Activated T-helper 1 cell treated with anti-CD3 and anti-CD28 coated beads, Interleukin-12 subunit alpha, Interleukin-12 subunit beta, Interleukin-2, Interleukin-4 antibody, amounts not matched to agents 30 ng/mL and 10 ng/mL and 1 ng/mL, durations not matched to agents 14 hours and 24 hours and 36 hours (primary cell): ENCODE measurements at regions of chr11 and their contacts with region 1.

Region 1: DNA sequence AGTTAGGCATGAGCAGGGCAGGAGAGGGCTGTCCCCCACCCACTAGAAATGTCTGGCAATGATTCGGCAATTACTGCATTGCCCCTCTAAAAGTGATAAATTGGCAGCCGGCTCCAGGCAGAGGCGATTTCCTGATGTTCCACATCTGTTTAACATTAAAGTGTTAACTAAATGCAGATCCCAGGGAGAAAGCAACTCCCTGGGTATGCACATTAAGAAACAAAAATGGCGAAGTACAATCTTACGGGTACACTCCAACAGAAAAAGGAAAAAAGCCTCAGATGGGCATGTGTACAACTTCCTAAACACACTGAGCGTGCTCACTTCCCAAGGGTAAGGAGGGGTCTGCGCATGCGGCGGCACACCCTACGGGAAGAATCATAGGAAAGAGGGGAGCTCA is 314.4 kb downstream of the CASP12 start:
- DNase-seq: no peak
- H3K4me3 Mint-ChIP-seq: no peak overlapping the region
- H3K27ac Mint-ChIP-seq: no peak overlapping the region
- H3K4me1 Mint-ChIP-seq: no peaks in the 10 kb centered on the region
- H3K27me3 Mint-ChIP-seq: peaks cover 16% of the 10 kb centered on the region

Region 2: GRCh38 chr11:104602643-104603042 is 18.8 kb after region 1 on chr11:
- intact Hi-C with region 1: loop called (anchors 1 kb)
- DNase-seq: no peak
- H3K4me3 Mint-ChIP-seq: no peak overlapping the region
- H3K27ac Mint-ChIP-seq: no peak overlapping the region
- H3K4me1 Mint-ChIP-seq: no peaks in the 10 kb centered on the region
- H3K27me3 Mint-ChIP-seq: peaks cover 4% of the 10 kb centered on the region